ENCODE measurements at regions of chr1 and their contacts with region 1.

Region 1: DNA sequence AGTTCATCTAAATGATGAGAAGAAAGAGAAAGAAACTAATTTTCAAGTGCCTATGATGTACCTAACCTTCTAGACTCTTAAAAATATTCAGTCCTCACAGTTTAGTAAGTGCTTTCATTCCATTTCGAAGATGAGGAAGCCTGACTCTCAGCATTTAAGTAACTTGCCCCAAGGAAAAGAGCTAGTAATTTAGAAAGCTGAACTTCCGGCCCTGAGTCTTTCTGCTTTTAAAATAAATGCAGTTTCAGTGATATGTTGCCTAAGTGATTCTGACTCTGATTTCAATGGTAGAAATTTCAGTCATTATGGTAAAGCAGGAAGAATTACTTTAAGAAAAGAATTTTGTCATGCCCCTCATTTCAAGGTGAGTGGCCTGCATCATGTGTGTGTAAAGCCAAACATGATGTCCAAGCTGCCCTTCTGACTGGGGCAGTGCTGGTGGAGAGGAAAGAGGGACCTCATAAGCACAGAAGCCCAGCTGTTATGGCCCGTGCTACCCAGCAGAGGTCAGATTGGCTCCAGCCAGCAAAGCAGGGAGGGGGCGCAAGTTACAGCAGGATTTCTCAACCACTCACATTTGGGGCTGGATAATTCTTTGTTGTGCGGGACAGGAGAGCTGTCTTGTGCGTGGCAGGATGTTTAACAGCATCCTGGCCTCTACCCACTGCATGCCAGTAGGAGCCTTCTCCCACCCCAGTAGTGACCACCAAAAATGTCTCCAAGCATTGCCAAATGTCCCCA is 10.7 kb downstream of the ATP1A4 start:
- DNase-seq: peak; percentile 78
- ATAC-seq: peak; percentile 98
- H3K4me3 Mint-ChIP-seq: no peak overlapping the region
- H3K27ac Mint-ChIP-seq: no peak overlapping the region
- H3K4me1 Mint-ChIP-seq: peaks cover 20% of the 10 kb centered on the region
- H3K27me3 Mint-ChIP-seq: peaks cover 14% of the 10 kb centered on the region
- CTCF ChIP-seq: peak; percentile 59

Region 2: DNA sequence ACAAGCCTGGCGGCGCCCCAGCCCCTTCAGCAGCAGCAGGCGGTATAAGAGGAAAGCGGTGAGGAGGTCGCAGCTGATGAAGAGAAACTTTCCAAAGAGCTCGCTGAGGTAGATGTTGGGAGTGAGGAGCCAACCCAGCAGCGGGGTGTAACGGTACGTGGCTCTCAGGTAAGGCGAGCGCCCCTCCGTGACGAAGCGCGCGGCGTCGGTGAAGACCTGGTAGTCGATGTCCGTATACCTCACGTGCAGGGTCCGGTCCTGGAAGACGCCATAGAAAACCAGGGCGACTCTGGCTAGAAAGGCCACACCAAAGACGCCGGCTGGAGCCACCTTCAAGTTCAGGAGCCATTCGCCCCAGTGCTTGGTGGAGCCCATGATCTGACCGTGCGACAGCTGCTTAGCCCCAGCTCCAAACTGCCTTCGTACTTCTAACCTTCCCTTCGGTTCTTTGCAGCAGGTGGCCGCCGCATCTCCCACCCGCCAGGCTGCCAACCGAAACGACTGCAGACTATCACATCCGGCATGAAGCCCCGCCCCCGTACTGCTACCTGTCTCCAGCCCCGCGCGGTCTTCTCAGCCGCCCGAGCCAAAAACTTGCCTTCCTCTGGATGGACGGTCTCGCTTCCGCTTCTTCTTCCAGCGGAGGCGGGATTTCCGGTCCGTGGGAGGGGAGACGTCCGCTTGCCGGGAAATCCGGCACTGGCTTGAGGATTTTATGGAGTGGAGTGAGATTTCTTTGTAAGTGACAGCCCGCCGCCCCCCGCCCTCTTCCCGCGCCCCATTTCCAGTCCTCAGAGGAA is 130.6 kb before region 1 on chr1 and contains the start of gene PIGM:
- CTCF ChIA-PET with region 1: no interaction called
- POLR2A ChIA-PET with region 1: no interaction called
- DNase-seq: peak; percentile 99
- ATAC-seq: peak; percentile 98
- H3K4me3 Mint-ChIP-seq: peak within 1 kb of the TSS; percentile 91
- H3K27ac Mint-ChIP-seq: peak within 1 kb of the TSS; percentile 97
- H3K4me1 Mint-ChIP-seq: peaks cover 17% of the 10 kb centered on the region
- H3K27me3 Mint-ChIP-seq: peaks cover 12% of the 10 kb centered on the region; the same call in 1 of the 2 replicates
- CTCF ChIP-seq: no peak
- total RNA-seq, gene PIGM: 4.4 to 5.2 TPM (median 4.4 TPM) in 3 replicates

Region 3: DNA sequence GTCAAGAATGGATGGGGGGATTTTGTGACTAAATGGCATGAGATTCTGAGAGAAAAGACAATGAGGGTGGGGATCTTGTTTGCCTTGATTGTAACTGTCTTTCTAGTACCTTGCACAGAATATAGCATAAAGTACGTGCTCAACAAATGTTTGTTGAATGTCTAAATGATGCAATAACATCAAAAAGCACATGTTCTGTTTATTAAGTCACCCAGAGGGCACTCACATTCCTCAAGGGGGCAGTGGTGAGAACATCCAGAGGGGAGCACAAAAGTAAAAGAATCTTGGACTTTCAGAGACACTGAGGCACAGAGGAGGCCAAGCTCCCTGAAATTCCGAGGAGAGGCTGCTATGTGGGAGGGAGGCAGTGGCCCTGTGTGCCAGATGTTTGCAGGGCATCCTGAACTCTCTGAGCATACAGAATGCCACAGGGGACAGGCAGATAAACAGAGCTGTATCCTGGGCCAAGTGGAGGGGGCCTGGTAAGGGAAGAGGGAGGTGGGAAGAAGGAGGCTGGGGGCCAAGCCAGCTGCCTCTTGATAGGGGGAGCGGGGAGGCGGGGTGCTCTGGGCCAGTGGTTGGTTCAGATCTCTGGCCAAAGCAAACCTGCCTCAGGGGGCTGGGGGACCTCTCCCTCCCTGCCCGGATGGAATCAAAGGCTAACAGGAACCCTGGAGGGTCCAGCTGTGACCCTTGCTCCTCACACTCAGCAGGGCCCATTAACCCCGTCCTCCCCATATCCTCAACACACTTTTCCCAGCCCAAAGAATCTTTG is 53.1 kb before region 1 on chr1:
- CTCF ChIA-PET with region 1: interaction called, 12 read pairs
- POLR2A ChIA-PET with region 1: no interaction called
- DNase-seq: no peak
- ATAC-seq: peak; percentile 61
- H3K4me3 Mint-ChIP-seq: no peak overlapping the region; the same call in 1 of the 2 replicates
- H3K27ac Mint-ChIP-seq: peak overlapping the region; percentile 30
- H3K4me1 Mint-ChIP-seq: peaks cover 50% of the 10 kb centered on the region
- H3K27me3 Mint-ChIP-seq: peaks cover 5% of the 10 kb centered on the region; the same call in 1 of the 2 replicates
- CTCF ChIP-seq: peak; percentile 33; the same call in 1 of the 2 replicates

Region 4: DNA sequence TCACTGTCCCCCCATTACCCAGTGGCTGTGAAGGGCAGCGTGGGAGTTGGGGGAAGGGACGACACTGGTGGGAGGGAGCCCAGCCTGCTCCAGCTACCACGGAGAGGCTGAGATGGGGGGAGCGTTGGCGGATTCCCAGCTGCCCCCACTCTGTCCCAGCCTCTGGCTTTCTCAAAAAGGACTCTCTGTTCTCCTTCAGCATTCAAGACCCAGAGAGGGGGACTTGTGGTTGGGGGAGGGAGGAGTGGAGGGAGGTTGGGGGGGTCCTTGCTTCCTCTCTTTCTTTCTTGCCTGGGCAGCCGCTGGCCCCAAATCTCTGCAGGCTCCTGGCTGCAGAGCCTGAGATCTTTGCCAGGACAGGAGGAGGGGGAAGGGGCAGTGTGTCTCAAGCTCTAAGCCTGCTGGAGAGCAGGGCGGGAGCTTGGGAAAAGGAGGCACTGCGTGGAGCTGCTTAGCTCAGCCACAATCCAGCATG is 44.4 kb before region 1 on chr1:
- CTCF ChIA-PET with region 1: interaction called, 12 read pairs
- POLR2A ChIA-PET with region 1: no interaction called
- DNase-seq: no peak
- ATAC-seq: peak; percentile 40; the same call in 1 of the 2 replicates
- H3K4me3 Mint-ChIP-seq: 0 out of 2 replicates have a peak overlapping the region, but pooled peaks have one; percentile 16
- H3K27ac Mint-ChIP-seq: no peak overlapping the region
- H3K4me1 Mint-ChIP-seq: peaks cover 58% of the 10 kb centered on the region
- H3K27me3 Mint-ChIP-seq: peaks cover under 1% of the 10 kb centered on the region; the same call in 1 of the 2 replicates
- CTCF ChIP-seq: no peak

Region 5: GRCh38 chr1:160151303-160151702 is 10.8 kb before region 1 on chr1 and contains the start of gene ATP1A4:
- CTCF ChIA-PET with region 1: interaction called, 10 read pairs
- POLR2A ChIA-PET with region 1: interaction called, 5 read pairs
- DNase-seq: no peak
- ATAC-seq: no peak
- H3K4me3 Mint-ChIP-seq: no peak within 1 kb of the TSS
- H3K27ac Mint-ChIP-seq: no peak within 1 kb of the TSS; the same call in 1 of the 2 replicates
- H3K4me1 Mint-ChIP-seq: no peaks in the 10 kb centered on the region
- H3K27me3 Mint-ChIP-seq: no peaks in the 10 kb centered on the region; the same call in 1 of the 2 replicates
- CTCF ChIP-seq: no peak
- total RNA-seq, gene ATP1A4: 0.37 to 0.78 TPM (median 0.55 TPM) in 3 replicates

Region 6: DNA sequence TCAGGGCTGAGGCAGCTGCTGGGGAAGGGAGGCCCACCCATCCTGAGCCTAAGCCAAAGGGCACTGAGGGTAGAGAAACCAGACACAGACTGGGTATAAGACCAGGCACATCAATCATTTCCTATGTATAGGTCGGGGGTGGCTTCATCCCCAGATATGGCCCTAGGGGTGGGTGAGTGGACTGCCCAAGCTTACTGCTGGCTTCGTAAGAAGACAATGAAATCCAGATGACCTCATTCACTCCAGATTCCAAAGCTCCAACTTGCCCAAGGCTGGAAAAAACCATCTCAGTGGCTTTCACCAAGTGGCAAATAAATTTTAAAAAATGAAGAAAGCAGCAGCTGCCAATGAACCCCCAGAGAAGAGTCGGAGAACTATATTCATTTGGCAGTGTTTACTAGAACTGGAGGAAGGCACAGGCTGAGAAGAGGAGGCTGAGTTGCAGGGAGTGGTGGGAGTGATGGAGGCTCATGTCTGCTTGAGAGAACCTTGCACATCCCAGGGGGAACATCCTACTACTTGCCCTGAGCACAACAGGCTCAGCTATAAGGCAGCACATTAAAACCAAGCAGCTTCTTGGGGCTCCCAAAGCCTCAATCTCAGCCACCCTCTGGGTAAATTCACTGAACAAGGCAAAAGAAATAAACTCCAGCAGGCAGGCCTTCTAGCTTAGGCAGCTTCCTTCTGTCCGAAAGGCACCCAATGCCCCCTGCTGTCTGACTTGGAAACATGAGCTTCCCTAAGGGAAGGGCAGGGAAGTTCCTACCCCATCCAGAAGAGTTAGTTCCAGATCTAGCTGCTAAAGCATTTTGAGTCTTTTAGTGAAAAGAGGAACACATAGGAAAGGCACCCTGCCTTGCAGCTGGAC is 57.2 kb after region 1 on chr1:
- CTCF ChIA-PET with region 1: interaction called, 71 read pairs
- POLR2A ChIA-PET with region 1: no interaction called
- DNase-seq: peak; percentile 69
- ATAC-seq: peak; percentile 87
- H3K4me3 Mint-ChIP-seq: no peak overlapping the region
- H3K27ac Mint-ChIP-seq: peak overlapping the region; percentile 79
- H3K4me1 Mint-ChIP-seq: peaks cover 15% of the 10 kb centered on the region
- H3K27me3 Mint-ChIP-seq: no peaks in the 10 kb centered on the region
- CTCF ChIP-seq: no peak

Measured in WTC11 (cell line).